CD8-positive, alpha-beta memory T cell (primary cell): ENCODE measurements at regions of chr11 and their contacts with region 1.

Region 1: DNA sequence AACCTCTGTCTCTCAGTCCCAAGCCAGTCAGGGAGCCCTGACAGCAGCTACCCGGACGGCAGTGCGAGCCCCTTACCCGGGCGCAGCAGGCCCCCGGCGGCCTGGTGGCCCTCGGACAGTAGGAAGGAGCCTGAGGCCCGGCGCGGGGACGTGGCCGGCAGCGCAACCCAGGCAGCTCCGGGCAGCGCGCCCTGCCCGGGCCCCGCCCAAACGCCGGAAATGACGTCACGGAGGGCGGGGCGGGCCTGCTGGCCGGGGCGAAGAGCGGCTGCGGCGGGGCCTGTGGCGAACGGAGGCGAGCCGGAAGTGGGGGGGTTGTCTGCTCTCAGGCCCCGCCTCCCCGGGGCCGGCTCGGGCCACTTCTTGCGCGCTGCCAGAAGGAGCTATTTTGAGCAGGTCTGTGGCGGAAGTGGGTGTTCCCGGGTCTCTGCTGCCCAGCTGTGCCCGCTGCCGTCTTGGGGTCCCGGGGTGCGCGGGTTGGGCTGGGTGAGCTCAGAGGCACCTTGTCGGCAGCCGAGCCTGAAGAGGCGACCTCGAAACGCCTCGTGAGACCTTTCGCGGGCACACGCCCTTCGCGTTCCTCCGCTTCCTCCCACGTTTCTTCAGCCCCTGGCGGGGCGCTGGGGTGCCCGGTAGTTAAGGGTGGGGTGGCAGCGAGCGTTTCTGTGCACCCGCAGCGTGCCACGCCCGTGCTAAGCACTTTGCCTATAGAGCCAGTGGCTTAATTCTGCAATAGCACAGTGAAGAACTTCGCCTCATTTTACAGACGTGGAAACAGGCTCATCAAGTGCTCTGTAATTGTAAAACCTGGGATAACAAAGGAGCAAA is at the start of gene C11orf24:
- DNase-seq: peak; percentile 91 to 95 (median 93)
- H3K4me3 ChIP-seq: peak within 1 kb of the TSS; percentile 91
- H3K4me3 Mint-ChIP-seq: peak within 1 kb of the TSS; percentile 88 to 97 (median 94)
- H3K27ac ChIP-seq: peak within 1 kb of the TSS; percentile 93
- H3K27ac Mint-ChIP-seq: peak within 1 kb of the TSS; percentile 89 to 99 (median 98)
- H3K4me1 ChIP-seq: peaks cover 21% of the 10 kb centered on the region
- H3K4me1 Mint-ChIP-seq: peaks cover 28 to 39% (median 35%) of the 10 kb centered on the region in 3 donors
- H3K27me3 ChIP-seq: no peaks in the 10 kb centered on the region
- H3K27me3 Mint-ChIP-seq: peaks cover 0 to 1% of the 10 kb centered on the region in 2 donors
- total RNA-seq, gene C11orf24: 46.9 to 49.8 TPM

Region 2: DNA sequence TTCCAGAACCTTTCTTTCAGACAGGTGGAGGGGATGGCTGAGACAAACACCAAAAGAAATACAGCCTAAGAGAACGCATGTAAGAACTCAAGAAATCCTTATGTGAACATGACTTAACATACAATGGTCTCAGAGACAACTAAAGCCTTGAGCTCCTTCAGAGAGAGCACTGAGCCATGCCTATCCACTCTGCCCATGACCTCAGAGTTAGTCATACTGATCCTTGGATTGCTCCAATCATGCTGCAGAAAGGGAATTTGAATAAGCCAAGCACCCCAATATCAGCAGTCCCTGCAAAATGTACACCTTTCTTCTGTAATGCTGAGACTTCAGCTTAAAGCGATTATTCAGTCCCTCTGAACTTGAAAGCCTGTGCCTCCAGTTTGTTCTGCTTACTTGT is 107.6 kb before region 1 on chr11:
- CTCF ChIA-PET with region 1: no interaction called
- POLR2A ChIA-PET with region 1: no interaction called
- DNase-seq: no peak
- H3K4me3 ChIP-seq: no peak overlapping the region
- H3K4me3 Mint-ChIP-seq: no peak overlapping the region
- H3K27ac ChIP-seq: no peak overlapping the region
- H3K27ac Mint-ChIP-seq: no peak overlapping the region
- H3K4me1 ChIP-seq: no peaks in the 10 kb centered on the region
- H3K4me1 Mint-ChIP-seq: no peaks in the 10 kb centered on the region
- H3K27me3 ChIP-seq: no peaks in the 10 kb centered on the region
- H3K27me3 Mint-ChIP-seq: no peaks in the 10 kb centered on the region

Region 3: GRCh38 chr11:68257475-68258362 is 14.3 kb before region 1 on chr11:
- CTCF ChIA-PET with region 1: interaction called, 19 read pairs
- POLR2A ChIA-PET with region 1: interaction called, 4 read pairs
- DNase-seq: peak; percentile 82 to 93 (median 88)
- H3K4me3 ChIP-seq: no peak overlapping the region
- H3K4me3 Mint-ChIP-seq: no peak overlapping the region
- H3K27ac ChIP-seq: no peak overlapping the region
- H3K27ac Mint-ChIP-seq: peak overlapping the region in 4 of 8 donors; percentile 1 to 68 (median 16)
- H3K4me1 ChIP-seq: peaks cover 4% of the 10 kb centered on the region
- H3K4me1 Mint-ChIP-seq: peaks cover 3 to 6% (median 4%) of the 10 kb centered on the region in 3 donors
- H3K27me3 ChIP-seq: no peaks in the 10 kb centered on the region
- H3K27me3 Mint-ChIP-seq: peaks cover 2 to 5% of the 10 kb centered on the region in 2 donors

Region 4: GRCh38 chr11:68328374-68329091 is 56.5 kb after region 1 on chr11:
- CTCF ChIA-PET with region 1: no interaction called
- POLR2A ChIA-PET with region 1: no interaction called
- DNase-seq: no peak
- H3K4me3 ChIP-seq: no peak overlapping the region
- H3K4me3 Mint-ChIP-seq: peak overlapping the region in 2 of 7 donors; percentile 26 to 46
- H3K27ac ChIP-seq: no peak overlapping the region
- H3K27ac Mint-ChIP-seq: no peak overlapping the region
- H3K4me1 ChIP-seq: peaks cover 60% of the 10 kb centered on the region
- H3K4me1 Mint-ChIP-seq: peaks cover 33 to 43% (median 43%) of the 10 kb centered on the region in 3 donors
- H3K27me3 ChIP-seq: no peaks in the 10 kb centered on the region
- H3K27me3 Mint-ChIP-seq: peaks cover 1 to 4% of the 10 kb centered on the region in 2 donors

Region 5: DNA sequence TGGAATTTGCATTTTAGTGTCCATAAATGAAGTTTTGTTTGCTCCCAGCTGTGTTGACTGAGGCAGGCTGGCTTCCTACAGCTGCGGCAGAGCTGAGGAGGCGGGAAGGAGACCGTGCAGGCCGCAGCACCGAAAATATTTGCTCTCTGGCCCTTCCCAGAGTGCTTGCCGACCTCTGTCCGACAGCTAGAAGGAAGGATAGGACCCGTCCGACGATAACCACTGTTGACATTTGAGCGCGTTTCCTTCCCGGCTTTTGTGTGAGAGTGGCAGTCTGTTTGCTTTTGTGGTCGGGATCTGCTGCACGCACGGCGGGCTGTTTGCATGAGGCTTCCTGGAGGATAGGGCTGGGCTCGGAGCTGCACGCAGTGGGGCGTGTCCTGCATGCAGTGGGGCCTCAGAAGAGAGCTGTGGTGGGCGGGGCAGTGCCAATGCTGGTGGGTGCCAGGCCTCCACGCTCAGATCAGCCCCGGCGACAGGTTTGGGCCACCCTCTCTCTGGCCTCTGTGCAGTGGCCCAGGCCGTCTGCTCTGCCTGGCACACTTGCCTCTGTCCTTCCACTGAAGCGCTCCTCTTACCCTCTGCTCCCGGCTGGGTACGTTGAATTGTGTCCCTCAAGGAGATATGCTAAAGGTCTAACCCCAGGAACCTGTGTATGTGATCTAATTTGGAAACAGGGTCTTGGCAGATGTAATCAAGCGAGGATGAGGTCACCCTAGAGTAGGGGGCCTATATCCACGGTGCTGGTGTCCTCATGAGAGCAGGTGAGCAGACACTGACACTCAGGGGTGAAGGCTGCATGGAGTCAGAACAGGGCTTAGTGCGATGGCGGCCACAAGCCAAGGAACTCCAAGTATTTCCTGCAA is 108.5 kb after region 1 on chr11:
- CTCF ChIA-PET with region 1: no interaction called
- POLR2A ChIA-PET with region 1: no interaction called
- DNase-seq: peak in 1 of 5 donors; percentile 8
- H3K4me3 ChIP-seq: no peak overlapping the region
- H3K4me3 Mint-ChIP-seq: peak overlapping the region in 1 of 7 donors; percentile 16
- H3K27ac ChIP-seq: no peak overlapping the region
- H3K27ac Mint-ChIP-seq: peak overlapping the region in 1 of 8 donors; percentile 61
- H3K4me1 ChIP-seq: no peaks in the 10 kb centered on the region
- H3K4me1 Mint-ChIP-seq: peaks cover 9 to 13% (median 11%) of the 10 kb centered on the region in 3 donors
- H3K27me3 ChIP-seq: no peaks in the 10 kb centered on the region
- H3K27me3 Mint-ChIP-seq: peaks cover 8 to 16% of the 10 kb centered on the region in 2 donors